Cardiac septum (tissue), 1 donor: ENCODE measurements at regions of chr9 and their contacts with region 1.

Region 1: DNA sequence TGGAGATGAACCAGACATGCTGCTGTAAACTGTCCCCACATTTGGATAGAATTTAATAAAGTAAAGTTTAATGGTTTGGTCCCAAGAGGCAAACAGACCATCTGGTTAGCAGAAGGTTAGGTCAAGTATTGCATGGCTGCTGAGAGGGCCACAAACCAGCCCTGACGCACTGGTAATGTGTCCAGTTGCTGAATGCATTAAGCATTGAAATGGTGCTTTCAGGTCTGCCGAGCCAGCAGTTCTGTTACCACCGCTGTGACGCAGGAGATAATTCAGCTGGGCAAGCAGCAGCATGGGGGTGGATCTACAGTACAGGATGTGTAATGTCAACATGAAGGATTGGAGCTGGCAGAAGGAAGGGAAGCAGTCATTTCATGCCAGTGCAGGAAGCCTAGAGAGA is 16.0 kb downstream of the ZNF462 start:
- DNase-seq: peak; percentile 88

Region 2: DNA sequence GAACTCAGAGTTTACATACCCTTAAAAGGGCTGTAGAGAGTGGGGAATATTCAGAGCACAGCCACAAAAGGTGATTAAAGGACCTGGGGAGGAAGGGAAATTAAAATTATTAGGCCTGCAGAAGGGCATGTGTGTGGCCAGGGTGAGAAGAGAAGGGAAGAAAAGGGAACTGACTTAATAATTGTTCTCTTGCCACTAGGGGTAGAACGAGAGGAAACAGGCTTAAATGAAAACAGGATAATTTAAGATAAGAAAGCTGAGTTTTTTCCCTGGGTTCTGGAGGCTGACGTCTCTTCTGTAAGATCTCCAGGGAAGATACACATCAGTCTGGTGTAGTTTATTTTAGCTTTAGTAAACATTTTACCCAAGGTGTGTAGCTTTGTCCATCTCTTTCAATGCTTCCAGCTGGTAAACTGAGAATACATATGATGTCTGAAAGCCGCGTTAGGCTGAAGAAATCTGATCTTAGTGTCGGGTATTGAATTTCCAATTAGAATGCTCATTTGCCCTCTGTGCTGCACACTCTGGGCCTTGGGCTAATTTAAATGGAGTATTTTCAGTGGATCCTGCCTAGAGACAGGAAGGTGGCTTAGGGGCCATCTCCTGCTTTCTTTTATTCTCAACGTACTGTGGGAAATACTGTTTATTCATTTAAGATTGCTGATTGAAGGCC is 767.7 kb before region 1 on chr9:
- intact Hi-C with region 1: no loop called
- DNase-seq: no peak

Region 3: GRCh38 chr9:106921341-106921899 is 42.5 kb after region 1 on chr9:
- intact Hi-C with region 1: loop called (anchors 5 kb)
- DNase-seq: no peak

Region 4: GRCh38 chr9:106962615-106963363 is 83.9 kb after region 1 on chr9:
- intact Hi-C with region 1: no loop called
- DNase-seq: no peak